ENCODE measurements at regions of chr1 and their contacts with region 1.

Region 1: GRCh38 chr1:246497331-246497915 is 9.7 kb downstream of the SMYD3 start:
- DNase-seq: peak; percentile 44
- H3K4me3 Mint-ChIP-seq: no peak overlapping the region
- H3K27ac Mint-ChIP-seq: no peak overlapping the region
- H3K4me1 Mint-ChIP-seq: peaks cover 22% of the 10 kb centered on the region
- H3K27me3 Mint-ChIP-seq: no peaks in the 10 kb centered on the region
- CTCF ChIP-seq: peak; percentile 46

Region 2: DNA sequence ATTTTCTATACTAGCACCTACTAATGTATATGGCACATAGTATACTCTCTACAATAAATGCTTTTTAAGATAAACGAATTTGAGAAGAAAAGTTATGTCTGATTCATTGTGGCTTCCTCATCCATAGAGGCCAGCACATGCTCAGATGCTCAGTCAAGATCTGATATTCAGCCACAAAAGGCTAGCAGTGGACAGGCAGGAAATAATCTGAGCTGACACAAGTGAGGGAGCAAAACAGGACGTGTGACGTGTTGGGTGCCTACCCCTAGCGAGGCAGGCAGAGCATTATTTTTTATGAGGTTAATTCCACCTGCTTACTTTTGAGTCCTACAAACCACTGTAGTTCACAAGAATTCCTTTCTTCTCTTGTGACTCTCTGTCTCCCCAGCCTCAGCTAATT is 541.2 kb before region 1 on chr1:
- CTCF ChIA-PET with region 1: no interaction called
- intact Hi-C with region 1: no loop called
- DNase-seq: no peak
- H3K4me3 Mint-ChIP-seq: no peak overlapping the region
- H3K27ac Mint-ChIP-seq: no peak overlapping the region
- H3K4me1 Mint-ChIP-seq: peaks cover 10% of the 10 kb centered on the region
- H3K27me3 Mint-ChIP-seq: no peaks in the 10 kb centered on the region
- CTCF ChIP-seq: no peak

Region 3: DNA sequence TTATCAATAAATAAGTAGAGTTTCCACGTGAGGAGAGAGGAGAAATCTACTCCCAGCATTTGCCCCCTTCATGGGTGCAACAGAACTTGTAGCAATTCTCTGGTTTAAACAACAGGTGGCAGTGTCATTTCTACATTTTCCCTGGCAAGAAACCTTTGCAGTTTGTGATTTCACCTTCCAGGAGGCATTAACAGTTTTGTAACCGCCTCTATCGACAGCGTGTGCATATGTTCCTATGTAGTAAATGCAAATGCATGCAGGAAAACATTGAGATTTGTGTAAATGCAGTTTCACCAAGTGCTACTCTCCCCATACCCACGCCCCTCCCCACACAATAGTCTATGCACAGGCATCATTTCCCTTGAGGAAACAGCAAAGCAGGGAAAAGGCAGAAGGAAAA is 485.1 kb before region 1 on chr1:
- CTCF ChIA-PET with region 1: no interaction called
- intact Hi-C with region 1: loop called (anchors 1 kb)
- DNase-seq: peak; percentile 17
- H3K4me3 Mint-ChIP-seq: no peak overlapping the region
- H3K27ac Mint-ChIP-seq: no peak overlapping the region
- H3K4me1 Mint-ChIP-seq: no peaks in the 10 kb centered on the region
- H3K27me3 Mint-ChIP-seq: no peaks in the 10 kb centered on the region
- CTCF ChIP-seq: peak; percentile 55

Region 4: DNA sequence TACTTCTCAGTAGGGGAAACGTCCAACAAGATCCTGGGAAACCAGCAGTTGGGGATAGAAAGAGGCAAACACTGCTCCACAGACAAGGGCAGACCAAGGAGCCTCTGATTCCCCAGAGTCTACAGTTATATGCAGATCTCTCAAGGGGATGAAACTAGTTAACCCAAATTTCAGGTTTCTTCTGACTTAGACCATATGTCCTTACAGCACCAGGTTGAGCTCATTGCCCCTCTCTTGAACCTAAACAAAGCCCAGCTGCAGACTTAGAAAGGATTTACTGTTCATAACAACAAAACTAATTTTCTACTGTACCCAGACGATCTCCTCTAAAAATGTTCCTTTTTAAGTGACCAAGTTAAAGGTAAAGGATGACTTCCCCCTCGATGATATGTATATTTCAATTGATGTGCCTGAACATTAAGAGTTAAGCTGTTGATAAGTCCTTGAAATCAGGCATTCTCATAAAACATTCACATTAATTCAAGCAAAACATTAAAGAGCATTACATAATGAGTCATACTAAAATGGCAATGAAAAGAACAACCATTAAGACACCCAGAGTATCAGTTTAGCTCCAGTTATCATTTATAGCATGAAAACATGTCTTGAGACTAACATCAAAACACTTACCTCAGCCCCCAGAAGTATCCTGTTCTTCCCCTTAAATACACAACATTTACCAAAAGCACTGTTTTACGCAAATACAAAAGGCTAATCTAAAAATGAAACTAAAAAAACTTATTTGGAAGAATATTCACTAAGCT is 14.4 kb before region 1 on chr1:
- CTCF ChIA-PET with region 1: no interaction called
- intact Hi-C with region 1: no loop called
- DNase-seq: no peak
- H3K4me3 Mint-ChIP-seq: no peak overlapping the region
- H3K27ac Mint-ChIP-seq: no peak overlapping the region
- H3K4me1 Mint-ChIP-seq: no peaks in the 10 kb centered on the region
- H3K27me3 Mint-ChIP-seq: no peaks in the 10 kb centered on the region
- CTCF ChIP-seq: no peak

Region 5: DNA sequence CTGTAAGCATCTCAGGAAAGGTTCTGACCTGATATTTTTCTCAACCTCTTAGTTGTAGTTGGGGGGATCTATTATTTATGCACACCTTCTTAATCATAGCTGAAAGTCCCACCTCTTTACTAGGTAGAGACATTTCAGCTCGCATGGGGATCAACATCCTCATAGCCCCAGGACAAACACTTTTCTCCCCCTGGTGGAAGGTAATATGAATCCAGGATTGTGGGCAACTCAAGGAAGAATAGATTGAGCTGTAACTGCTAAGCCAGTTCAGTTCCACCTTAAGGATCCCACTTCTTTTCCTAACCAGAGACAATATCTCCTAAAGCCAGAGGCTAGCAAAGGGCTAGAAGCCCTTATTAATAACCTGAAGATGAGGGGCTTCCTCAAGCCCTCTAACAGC is 35.1 kb after region 1 on chr1:
- CTCF ChIA-PET with region 1: interaction called, 3 read pairs
- intact Hi-C with region 1: loop called (anchors 2 kb)
- DNase-seq: no peak
- H3K4me3 Mint-ChIP-seq: no peak overlapping the region
- H3K27ac Mint-ChIP-seq: no peak overlapping the region
- H3K4me1 Mint-ChIP-seq: peaks cover 20% of the 10 kb centered on the region
- H3K27me3 Mint-ChIP-seq: peaks cover 8% of the 10 kb centered on the region
- CTCF ChIP-seq: peak; percentile 26

Region 6: DNA sequence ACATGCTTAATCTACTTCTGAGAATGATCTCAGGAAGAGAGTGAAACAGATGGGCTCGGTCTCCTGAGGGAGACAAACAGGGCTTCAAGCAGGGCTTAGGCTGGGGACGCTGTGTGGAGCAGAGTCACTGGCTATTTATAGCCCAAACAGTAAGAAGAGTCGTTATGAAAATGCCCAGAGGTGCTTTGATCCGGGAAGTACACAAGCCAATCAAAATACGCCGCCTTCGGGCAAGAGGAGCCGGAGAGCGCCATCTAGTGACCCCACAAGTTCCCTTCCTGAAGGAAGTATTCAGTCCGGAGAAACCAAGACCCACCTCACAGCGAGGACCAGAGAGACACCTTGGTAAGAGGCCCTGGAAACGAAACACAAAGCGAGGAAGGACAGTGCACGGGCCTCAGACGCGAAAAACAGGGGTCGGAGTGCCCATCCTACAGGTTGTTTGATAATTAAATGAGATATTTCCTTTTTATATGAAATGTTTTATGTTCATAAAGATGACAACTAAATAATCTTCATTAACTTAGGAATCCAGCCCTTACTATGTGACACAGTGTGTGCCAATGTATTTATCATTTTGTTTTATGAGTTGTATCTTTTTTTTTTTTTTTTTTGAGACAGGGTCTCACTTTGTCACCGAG is 201.8 kb after region 1 on chr1:
- CTCF ChIA-PET with region 1: no interaction called
- intact Hi-C with region 1: loop called (anchors 2 kb)
- DNase-seq: peak; percentile 90
- H3K4me3 Mint-ChIP-seq: peak overlapping the region; percentile 46
- H3K27ac Mint-ChIP-seq: peak overlapping the region; percentile 43
- H3K4me1 Mint-ChIP-seq: peaks cover 18% of the 10 kb centered on the region
- H3K27me3 Mint-ChIP-seq: no peaks in the 10 kb centered on the region
- CTCF ChIP-seq: peak; percentile 81